Activated B cell treated with CpG ODN at 0.5 μM for 24 hours (primary cell): ENCODE measurements at regions of chr14 and their contacts with region 1.

Region 1: DNA sequence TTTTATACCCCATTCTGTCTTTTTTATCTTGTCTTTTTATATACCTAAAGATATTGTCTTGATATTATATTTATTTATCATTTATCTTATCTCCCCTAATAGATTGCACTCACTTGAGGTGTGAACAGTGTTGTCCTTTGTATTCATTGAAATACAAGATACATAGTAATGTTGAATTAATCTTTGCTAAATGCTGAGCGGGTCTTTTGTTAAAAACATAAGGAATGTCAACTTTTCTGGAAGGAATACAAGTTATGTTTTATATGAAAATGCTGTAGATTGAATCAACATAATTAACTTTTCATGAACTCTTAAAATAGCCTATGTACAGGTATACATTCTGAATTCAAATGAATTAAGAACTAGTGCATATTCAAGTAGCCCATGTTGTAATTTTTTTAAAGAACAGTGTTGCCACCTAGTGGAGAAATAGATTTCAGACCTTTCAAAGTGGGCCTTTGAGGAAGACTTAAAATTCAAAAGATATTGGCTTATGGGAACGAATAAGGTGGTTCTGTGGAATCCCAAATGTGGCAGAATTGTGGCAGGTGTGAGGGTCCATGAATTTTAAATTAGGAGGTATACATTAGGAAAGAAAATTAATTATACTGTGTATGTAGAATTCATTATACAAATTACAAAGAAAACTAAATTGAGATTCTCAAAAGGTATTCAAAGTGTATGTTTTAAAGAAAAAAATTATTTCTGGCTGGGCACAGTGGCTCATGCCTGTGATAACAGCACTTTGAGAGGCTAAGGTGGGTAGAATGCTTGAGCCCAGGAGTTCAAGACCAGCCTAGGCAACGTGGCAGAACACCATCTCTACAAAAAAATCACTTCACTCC is 19.1 kb downstream of the BBOF1 start:
- DNase-seq: no peak
- ATAC-seq: no peak
- H3K4me3 Mint-ChIP-seq: no peak overlapping the region
- H3K27ac Mint-ChIP-seq: no peak overlapping the region
- H3K4me1 Mint-ChIP-seq: no peaks in the 10 kb centered on the region
- H3K27me3 Mint-ChIP-seq: no peaks in the 10 kb centered on the region
- CTCF ChIP-seq: peak; percentile 91

Region 2: DNA sequence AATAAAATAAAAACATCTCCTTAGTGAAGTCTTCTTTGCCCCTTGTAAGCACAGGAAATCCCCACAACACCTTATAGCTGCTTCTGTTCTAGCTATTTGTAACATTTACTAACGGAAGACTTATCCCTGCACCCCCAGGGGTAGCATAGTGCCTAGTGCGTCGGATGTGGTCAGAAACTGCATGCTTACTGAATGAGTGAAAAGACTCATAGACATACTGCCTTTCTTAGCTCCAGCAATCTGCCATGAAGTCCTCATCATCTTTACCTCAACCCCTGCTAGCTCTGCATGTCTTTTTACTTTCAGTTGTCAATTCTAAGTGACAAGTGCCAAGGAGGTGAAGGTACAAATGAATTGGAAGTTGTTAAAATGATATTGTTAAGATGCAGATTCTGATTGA is 534.6 kb before region 1 on chr14:
- CTCF ChIA-PET with region 1: no interaction called
- POLR2A ChIA-PET with region 1: no interaction called
- intact Hi-C with region 1: loop called (anchors 5 kb)
- DNase-seq: no peak
- ATAC-seq: no peak
- H3K4me3 Mint-ChIP-seq: no peak overlapping the region
- H3K27ac Mint-ChIP-seq: no peak overlapping the region
- H3K4me1 Mint-ChIP-seq: no peaks in the 10 kb centered on the region
- H3K27me3 Mint-ChIP-seq: no peaks in the 10 kb centered on the region
- CTCF ChIP-seq: no peak

Region 3: DNA sequence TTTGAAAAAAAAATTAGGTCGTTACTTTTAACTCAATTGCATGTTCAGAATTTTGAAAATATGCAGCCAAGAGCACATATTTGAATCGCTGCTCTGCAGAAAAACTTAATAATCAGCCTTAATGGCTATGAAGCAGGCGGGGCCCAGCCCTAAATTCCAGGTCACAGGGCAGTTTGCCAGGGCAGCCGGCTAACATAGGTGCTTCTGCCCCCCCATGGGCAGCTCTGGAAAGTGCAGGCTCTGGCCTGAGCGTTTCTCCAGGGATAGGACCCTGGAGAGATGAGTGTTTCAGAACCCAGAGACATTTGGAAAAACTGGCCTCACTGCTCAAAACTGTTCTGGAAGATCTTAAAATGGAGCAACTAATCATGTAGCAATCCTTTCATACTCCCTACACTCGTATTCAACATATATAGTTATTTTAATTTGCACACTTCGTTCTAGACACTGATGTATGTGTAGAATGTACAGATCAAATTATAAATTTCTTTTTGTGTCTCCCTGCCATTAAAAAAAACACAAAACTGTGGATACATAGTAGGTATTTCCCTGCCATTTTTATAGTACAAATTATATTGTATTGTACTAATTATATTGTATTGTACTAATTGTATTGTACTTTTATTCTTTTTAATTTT is 212.6 kb before region 1 on chr14:
- CTCF ChIA-PET with region 1: no interaction called
- POLR2A ChIA-PET with region 1: no interaction called
- intact Hi-C with region 1: loop called (anchors 2 kb)
- DNase-seq: peak; percentile 61
- ATAC-seq: peak; percentile 99
- H3K4me3 Mint-ChIP-seq: no peak overlapping the region
- H3K27ac Mint-ChIP-seq: no peak overlapping the region
- H3K4me1 Mint-ChIP-seq: peaks cover 6% of the 10 kb centered on the region
- H3K27me3 Mint-ChIP-seq: no peaks in the 10 kb centered on the region
- CTCF ChIP-seq: peak; percentile 96